ENCODE measurements at regions of chr2 and their contacts with region 1.

Region 1: DNA sequence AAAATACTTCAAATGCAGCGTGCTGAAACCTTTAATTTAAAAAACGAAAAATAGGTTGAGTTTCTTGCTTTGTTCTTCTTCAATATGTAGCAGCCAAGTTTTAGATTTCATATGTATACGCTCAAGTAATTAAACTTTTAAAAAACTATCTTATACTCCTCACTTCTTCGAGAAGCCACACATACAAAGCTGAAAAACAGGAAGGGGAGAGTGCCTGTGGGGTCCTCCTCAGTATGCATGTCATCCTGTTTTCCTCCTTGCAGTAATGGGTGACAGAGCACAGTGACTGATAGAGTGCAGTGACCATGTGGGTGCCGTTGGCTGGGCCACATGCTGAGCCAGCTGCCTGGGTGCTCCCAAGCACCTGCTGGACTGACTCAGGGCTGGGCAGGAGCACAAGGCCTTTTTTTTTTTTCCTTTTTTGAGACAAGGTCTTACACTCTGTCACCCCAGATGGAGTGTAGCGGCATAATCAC is 33.3 kb downstream of the UXS1 start:
- DNase-seq: no peak
- ATAC-seq: peak; percentile 74
- H3K4me3 Mint-ChIP-seq: peak overlapping the region; percentile 88
- H3K27ac Mint-ChIP-seq: peak overlapping the region; percentile 89
- H3K4me1 Mint-ChIP-seq: peaks cover 75% of the 10 kb centered on the region
- H3K27me3 Mint-ChIP-seq: no peaks in the 10 kb centered on the region
- CTCF ChIP-seq: no peak

Region 2: GRCh38 chr2:106020821-106021661 is 139.8 kb before region 1 on chr2:
- CTCF ChIA-PET with region 1: no interaction called
- POLR2A ChIA-PET with region 1: no interaction called
- intact Hi-C with region 1: no loop called
- DNase-seq: no peak
- ATAC-seq: no peak
- H3K4me3 Mint-ChIP-seq: no peak overlapping the region
- H3K27ac Mint-ChIP-seq: no peak overlapping the region
- H3K4me1 Mint-ChIP-seq: no peaks in the 10 kb centered on the region
- H3K27me3 Mint-ChIP-seq: peaks cover 2% of the 10 kb centered on the region
- CTCF ChIP-seq: no peak

Region 3: GRCh38 chr2:106147159-106147558 is 13.7 kb before region 1 on chr2:
- CTCF ChIA-PET with region 1: no interaction called
- POLR2A ChIA-PET with region 1: interaction called, 4 read pairs
- intact Hi-C with region 1: loop called (anchors 2 kb)
- DNase-seq: no peak
- ATAC-seq: no peak
- H3K4me3 Mint-ChIP-seq: no peak overlapping the region
- H3K27ac Mint-ChIP-seq: no peak overlapping the region
- H3K4me1 Mint-ChIP-seq: peaks cover 32% of the 10 kb centered on the region
- H3K27me3 Mint-ChIP-seq: no peaks in the 10 kb centered on the region
- CTCF ChIP-seq: no peak

Region 4: GRCh38 chr2:106183101-106183696 is 22.4 kb after region 1 on chr2:
- CTCF ChIA-PET with region 1: no interaction called
- POLR2A ChIA-PET with region 1: no interaction called
- intact Hi-C with region 1: no loop called
- DNase-seq: no peak
- ATAC-seq: no peak
- H3K4me3 Mint-ChIP-seq: no peak overlapping the region
- H3K27ac Mint-ChIP-seq: no peak overlapping the region
- H3K4me1 Mint-ChIP-seq: peaks cover 41% of the 10 kb centered on the region
- H3K27me3 Mint-ChIP-seq: no peaks in the 10 kb centered on the region
- CTCF ChIP-seq: no peak

Region 5: GRCh38 chr2:106269591-106270291 is 108.9 kb after region 1 on chr2:
- CTCF ChIA-PET with region 1: no interaction called
- POLR2A ChIA-PET with region 1: no interaction called
- intact Hi-C with region 1: no loop called
- DNase-seq: peak; percentile 32
- ATAC-seq: peak; percentile 82
- H3K4me3 Mint-ChIP-seq: peak overlapping the region; percentile 91
- H3K27ac Mint-ChIP-seq: no peak overlapping the region
- H3K4me1 Mint-ChIP-seq: peaks cover 16% of the 10 kb centered on the region
- H3K27me3 Mint-ChIP-seq: peaks cover 6% of the 10 kb centered on the region
- CTCF ChIP-seq: no peak